ENCODE measurements at regions of chr10 and their contacts with region 1.

Region 1: DNA sequence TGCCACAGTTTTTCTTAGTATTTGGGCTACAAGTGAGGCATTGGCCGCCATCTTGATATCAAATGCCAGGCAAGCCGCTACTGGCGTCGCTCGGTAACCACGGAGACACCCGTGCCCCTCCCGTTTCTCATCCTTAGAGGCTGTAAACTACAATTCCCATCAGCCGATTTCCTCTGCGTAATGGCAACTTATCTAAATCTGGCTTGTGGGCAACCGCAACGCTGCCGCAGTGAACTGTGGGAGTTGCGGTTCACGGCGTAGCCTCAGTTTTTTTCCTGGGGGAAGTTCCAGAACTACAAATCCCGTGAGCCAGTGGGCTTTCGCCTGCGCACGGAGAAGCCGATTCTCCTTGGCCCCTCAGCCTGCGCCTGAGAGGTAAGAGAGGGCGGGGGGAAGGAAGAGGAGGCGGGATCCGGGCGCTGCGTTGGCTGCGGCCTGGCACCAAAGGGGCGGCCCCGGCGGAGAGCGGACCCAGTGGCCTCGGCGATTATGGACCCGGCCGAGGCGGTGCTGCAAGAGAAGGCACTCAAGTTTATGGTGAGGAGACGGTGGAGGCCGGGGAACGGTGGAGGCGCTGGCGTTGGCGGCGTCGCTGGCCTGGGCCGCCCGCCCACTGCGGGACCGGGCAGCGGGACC is at the start of gene BTRC:
- DNase-seq: peak; percentile 90 to 99 (median 95)
- ATAC-seq: peak; percentile 96
- H3K4me3 ChIP-seq: peak within 1 kb of the TSS; percentile 84 to 86
- H3K4me3 Mint-ChIP-seq: peak within 1 kb of the TSS; percentile 99
- H3K27ac ChIP-seq: peak within 1 kb of the TSS; percentile 64 to 79
- H3K27ac Mint-ChIP-seq: peak within 1 kb of the TSS; percentile 97
- H3K4me1 ChIP-seq: peaks cover 6% of the 10 kb centered on the region
- H3K4me1 Mint-ChIP-seq: peaks cover 35% of the 10 kb centered on the region
- H3K27me3 ChIP-seq: no peaks in the 10 kb centered on the region
- H3K27me3 Mint-ChIP-seq: peaks cover 14% of the 10 kb centered on the region
- CTCF ChIP-seq: no peak
- total RNA-seq, gene BTRC: 8.5 to 9.3 TPM

Region 2: GRCh38 chr10:100912605-100913469 is 441.0 kb before region 1 on chr10 and contains the start of gene SLF2:
- CTCF ChIA-PET with region 1: no interaction called
- POLR2A ChIA-PET with region 1: no interaction called
- intact Hi-C with region 1: loop called (anchors 2 to 5 kb)
- DNase-seq: peak; percentile 75 to 96 (median 89)
- ATAC-seq: peak; percentile 84
- H3K4me3 ChIP-seq: peak within 1 kb of the TSS; percentile 98 to 100
- H3K4me3 Mint-ChIP-seq: peak within 1 kb of the TSS; percentile 99
- H3K27ac ChIP-seq: peak within 1 kb of the TSS; percentile 67 to 79
- H3K27ac Mint-ChIP-seq: peak within 1 kb of the TSS; percentile 98
- H3K4me1 ChIP-seq: peaks cover 21% of the 10 kb centered on the region
- H3K4me1 Mint-ChIP-seq: peaks cover 48% of the 10 kb centered on the region
- H3K27me3 ChIP-seq: no peaks in the 10 kb centered on the region
- H3K27me3 Mint-ChIP-seq: no peaks in the 10 kb centered on the region
- CTCF ChIP-seq: no peak
- total RNA-seq, gene SLF2: 8.0 to 8.3 TPM

Region 3: DNA sequence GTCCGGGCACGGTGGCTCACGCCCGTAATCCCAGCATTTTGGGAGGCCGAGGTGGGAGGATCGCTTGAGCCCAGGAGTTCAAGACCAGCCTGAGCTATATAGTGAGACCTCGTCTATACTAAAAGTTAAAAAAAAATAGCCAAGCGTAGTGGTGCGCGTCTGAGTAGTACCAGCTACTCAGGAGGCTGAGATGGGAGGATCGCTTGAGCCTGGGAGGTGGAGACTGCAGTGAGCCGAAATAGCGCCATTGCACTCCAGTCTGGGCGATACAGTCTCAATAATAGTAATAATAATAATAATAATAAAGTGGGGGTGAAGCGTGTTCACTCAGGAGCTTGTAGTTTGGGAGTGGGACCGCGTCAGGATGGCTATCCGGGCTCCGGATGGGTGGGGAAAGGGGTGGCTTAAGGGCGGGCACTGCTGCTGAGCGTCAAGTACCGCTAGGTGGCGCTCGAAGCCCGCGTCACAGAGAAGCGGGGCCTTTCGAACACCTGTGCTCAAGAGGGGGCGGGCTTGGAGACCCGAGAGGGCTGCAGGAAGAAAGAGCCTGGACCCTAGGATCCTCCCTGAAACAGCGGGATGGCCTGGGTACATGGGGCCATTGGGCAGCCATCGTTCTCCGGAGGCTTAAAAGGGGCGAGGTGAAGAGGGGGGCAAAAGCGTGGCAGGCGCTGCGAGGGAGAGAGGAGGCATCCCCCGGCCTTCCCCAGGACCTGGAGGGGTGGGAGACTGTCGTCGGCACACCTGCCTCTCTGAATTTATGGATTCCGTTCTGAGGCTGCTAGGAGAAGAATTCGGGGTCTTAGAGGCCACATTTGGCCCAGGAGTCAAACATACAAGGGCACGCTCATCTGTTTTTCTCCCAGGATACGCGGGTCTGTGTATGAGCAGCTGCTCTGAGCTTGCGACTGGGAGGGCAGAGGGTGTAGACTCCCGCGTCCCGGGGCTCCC is 139.1 kb before region 1 on chr10:
- CTCF ChIA-PET with region 1: no interaction called
- POLR2A ChIA-PET with region 1: no interaction called
- intact Hi-C with region 1: loop called (anchors 5 kb)
- DNase-seq: peak; percentile 50 to 84 (median 74)
- ATAC-seq: peak; percentile 78
- H3K4me3 ChIP-seq: no peak overlapping the region
- H3K4me3 Mint-ChIP-seq: peak overlapping the region; percentile 68
- H3K27ac ChIP-seq: no peak overlapping the region
- H3K27ac Mint-ChIP-seq: no peak overlapping the region
- H3K4me1 ChIP-seq: peaks cover 40% of the 10 kb centered on the region
- H3K4me1 Mint-ChIP-seq: peaks cover 29% of the 10 kb centered on the region
- H3K27me3 ChIP-seq: peaks cover 46 to 59% of the 10 kb centered on the region in 2 experiments
- H3K27me3 Mint-ChIP-seq: peaks cover 64% of the 10 kb centered on the region
- CTCF ChIP-seq: peak; percentile 77

Region 4: DNA sequence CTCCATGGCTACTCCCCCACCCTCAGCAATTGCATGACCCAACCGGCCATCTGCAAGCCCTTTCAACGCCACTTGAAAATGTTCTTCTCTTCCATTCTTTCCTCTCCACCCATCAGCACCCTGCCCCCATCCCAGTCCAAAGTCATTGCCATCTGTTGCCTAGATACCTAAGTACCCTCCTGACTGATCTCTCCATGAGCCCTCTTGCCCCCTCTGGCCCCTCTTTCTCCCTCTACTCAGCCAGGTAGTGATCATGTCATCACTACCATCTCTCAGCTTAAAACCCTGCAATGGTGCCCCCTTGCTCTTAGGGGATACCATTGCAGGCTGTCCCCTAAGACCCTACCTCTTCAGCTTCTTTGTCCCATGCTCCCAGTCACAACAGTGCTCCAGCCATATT is 30.3 kb before region 1 on chr10:
- CTCF ChIA-PET with region 1: no interaction called
- POLR2A ChIA-PET with region 1: no interaction called
- intact Hi-C with region 1: no loop called
- DNase-seq: no peak
- ATAC-seq: no peak
- H3K4me3 ChIP-seq: no peak overlapping the region
- H3K4me3 Mint-ChIP-seq: no peak overlapping the region
- H3K27ac ChIP-seq: no peak overlapping the region
- H3K27ac Mint-ChIP-seq: no peak overlapping the region
- H3K4me1 ChIP-seq: no peaks in the 10 kb centered on the region
- H3K4me1 Mint-ChIP-seq: no peaks in the 10 kb centered on the region
- H3K27me3 ChIP-seq: no peaks in the 10 kb centered on the region
- H3K27me3 Mint-ChIP-seq: peaks cover 17% of the 10 kb centered on the region
- CTCF ChIP-seq: no peak

Region 5: GRCh38 chr10:101587725-101588653 is 234.2 kb after region 1 on chr10 and contains the starts of genes DPCD and POLL:
- CTCF ChIA-PET with region 1: no interaction called
- POLR2A ChIA-PET with region 1: no interaction called
- intact Hi-C with region 1: loop called (anchors 2 to 5 kb)
- DNase-seq: peak; percentile 77 to 94 (median 91)
- ATAC-seq: peak; percentile 91
- H3K4me3 ChIP-seq: peak within 1 kb of the TSS; percentile 98
- H3K4me3 Mint-ChIP-seq: peak within 1 kb of the TSS; percentile 94
- H3K27ac ChIP-seq: peak within 1 kb of the TSS; percentile 69 to 72
- H3K27ac Mint-ChIP-seq: peak within 1 kb of the TSS; percentile 90
- H3K4me1 ChIP-seq: peaks cover 19% of the 10 kb centered on the region
- H3K4me1 Mint-ChIP-seq: peaks cover 25% of the 10 kb centered on the region
- H3K27me3 ChIP-seq: no peaks in the 10 kb centered on the region
- H3K27me3 Mint-ChIP-seq: no peaks in the 10 kb centered on the region
- CTCF ChIP-seq: no peak
- total RNA-seq, gene DPCD: 1.0 TPM in 1 of 2 experiments, not detected in the other
- total RNA-seq, gene POLL: 19.9 to 23.0 TPM

Region 6: GRCh38 chr10:101830322-101831168 is 476.7 kb after region 1 on chr10:
- CTCF ChIA-PET with region 1: no interaction called
- POLR2A ChIA-PET with region 1: no interaction called
- intact Hi-C with region 1: loop called in 1 of 2 experiments (anchors 10 kb)
- DNase-seq: peak; percentile 84 to 98 (median 93)
- ATAC-seq: peak; percentile 74
- H3K4me3 ChIP-seq: peak overlapping the region; percentile 49 to 51
- H3K4me3 Mint-ChIP-seq: peak overlapping the region; percentile 87
- H3K27ac ChIP-seq: peak overlapping the region; percentile 66 to 84
- H3K27ac Mint-ChIP-seq: peak overlapping the region; percentile 97
- H3K4me1 ChIP-seq: peaks cover 40% of the 10 kb centered on the region
- H3K4me1 Mint-ChIP-seq: peaks cover 47% of the 10 kb centered on the region
- H3K27me3 ChIP-seq: no peaks in the 10 kb centered on the region
- H3K27me3 Mint-ChIP-seq: no peaks in the 10 kb centered on the region
- CTCF ChIP-seq: no peak

Region 7: DNA sequence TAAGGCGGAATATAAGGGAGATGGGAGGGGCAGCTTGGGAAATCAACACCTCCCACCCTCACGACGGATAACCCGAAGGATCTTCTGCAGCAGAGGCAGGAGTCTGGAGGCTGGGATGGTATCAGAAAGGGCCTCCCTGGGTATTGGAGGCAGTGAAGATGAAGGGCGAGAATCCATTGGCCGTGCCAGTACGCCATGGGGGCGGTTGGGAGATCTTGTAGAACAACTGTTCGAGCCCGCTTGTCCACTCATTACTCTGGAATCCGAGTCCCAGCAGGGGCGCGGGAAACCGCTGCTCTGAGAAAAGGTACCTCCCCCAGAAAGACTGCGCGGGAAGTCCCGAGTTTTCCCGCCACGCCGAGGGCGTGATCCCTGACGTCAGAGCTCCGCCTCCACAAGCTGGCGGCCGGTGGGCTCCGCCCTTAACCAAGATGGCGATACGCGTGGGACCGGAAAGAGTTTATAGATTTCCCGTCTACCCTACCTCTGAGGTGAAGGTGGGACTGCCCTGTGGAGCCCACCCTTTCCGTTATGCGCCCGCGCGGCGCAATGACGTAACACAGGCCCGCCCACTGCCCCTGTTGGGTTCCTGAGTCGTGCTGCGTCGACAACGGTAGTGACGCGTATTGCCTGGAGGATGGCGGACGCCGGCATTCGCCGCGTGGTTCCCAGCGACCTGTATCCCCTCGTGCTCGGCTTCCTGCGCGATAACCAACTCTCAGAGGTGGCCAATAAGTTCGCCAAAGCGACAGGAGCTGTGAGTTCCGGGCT is 798.1 kb after region 1 on chr10 and contains the start of gene NOLC1:
- CTCF ChIA-PET with region 1: no interaction called
- POLR2A ChIA-PET with region 1: no interaction called
- intact Hi-C with region 1: loop called in 1 of 2 experiments (anchors 2 kb)
- DNase-seq: peak; percentile 99 to 100 (median 100)
- ATAC-seq: peak; percentile 93
- H3K4me3 ChIP-seq: peak within 1 kb of the TSS; percentile 80 to 92
- H3K4me3 Mint-ChIP-seq: peak within 1 kb of the TSS; percentile 89
- H3K27ac ChIP-seq: peak within 1 kb of the TSS; percentile 93 to 95
- H3K27ac Mint-ChIP-seq: peak within 1 kb of the TSS; percentile 90
- H3K4me1 ChIP-seq: peaks cover 27% of the 10 kb centered on the region
- H3K4me1 Mint-ChIP-seq: peaks cover 41% of the 10 kb centered on the region
- H3K27me3 ChIP-seq: no peaks in the 10 kb centered on the region
- H3K27me3 Mint-ChIP-seq: no peaks in the 10 kb centered on the region
- CTCF ChIP-seq: no peak
- total RNA-seq, gene NOLC1: 39.5 to 42.0 TPM

Region 8: GRCh38 chr10:102743588-102744373 is 1390.0 kb after region 1 on chr10 and contains the start of gene WBP1L:
- CTCF ChIA-PET with region 1: no interaction called
- POLR2A ChIA-PET with region 1: no interaction called
- intact Hi-C with region 1: loop called in 1 of 2 experiments (anchors 10 kb)
- DNase-seq: peak; percentile 90 to 99 (median 95)
- ATAC-seq: peak; percentile 96
- H3K4me3 ChIP-seq: peak within 1 kb of the TSS; percentile 87 to 99
- H3K4me3 Mint-ChIP-seq: peak within 1 kb of the TSS; percentile 92
- H3K27ac ChIP-seq: peak within 1 kb of the TSS; percentile 64 to 91
- H3K27ac Mint-ChIP-seq: peak within 1 kb of the TSS; percentile 90
- H3K4me1 ChIP-seq: peaks cover 34% of the 10 kb centered on the region
- H3K4me1 Mint-ChIP-seq: peaks cover 50% of the 10 kb centered on the region
- H3K27me3 ChIP-seq: no peaks in the 10 kb centered on the region
- H3K27me3 Mint-ChIP-seq: no peaks in the 10 kb centered on the region
- CTCF ChIP-seq: no peak
- total RNA-seq, gene WBP1L: 5.5 to 5.9 TPM